ENCODE measurements at regions of chr2 and their contacts with region 1.

Region 1: DNA sequence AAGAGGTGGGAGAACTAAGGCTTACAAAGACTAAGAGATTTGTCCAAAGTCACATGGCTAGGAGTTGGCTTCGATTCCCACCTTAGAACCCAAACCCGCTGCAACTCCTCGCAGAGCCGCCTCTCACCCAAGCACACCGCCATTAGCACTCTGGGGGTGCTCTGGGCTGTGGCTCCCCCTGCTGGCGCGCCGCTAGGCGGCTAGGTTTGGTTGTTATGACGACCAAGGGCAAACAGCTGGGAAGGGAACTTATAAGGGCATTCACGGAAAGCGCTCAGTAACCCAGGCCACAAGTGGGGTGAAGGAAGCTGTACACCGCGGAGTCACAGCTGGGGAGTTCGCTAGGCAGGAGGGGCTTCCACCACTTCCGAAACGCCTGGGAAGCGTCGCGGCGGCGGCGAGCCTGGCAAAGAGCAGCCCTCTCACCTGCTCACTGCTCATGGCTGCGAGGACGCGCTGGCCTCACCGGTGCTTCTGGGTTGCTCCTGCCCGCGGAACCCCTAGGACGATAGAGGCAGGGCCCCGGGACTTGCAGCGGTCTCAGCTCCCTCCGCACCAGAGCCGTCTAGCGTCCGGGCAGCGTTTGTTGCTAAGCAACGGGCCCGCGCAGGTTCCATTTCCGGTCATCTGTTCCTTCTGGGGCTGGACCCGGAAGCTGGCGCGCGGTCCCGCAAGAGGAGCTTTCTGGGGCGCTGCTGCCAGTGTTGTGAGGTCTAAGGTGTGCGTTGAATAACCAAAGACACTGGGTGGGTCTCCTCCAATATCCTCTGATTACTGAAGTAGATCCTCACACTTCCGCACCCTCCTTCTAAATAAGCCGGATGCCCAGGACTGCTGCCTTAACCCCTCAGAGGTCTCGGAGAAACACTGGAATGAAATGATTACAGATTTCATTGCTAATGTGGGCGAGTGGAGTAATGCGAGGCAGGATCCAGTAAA is at the start of gene DNAH7:
- DNase-seq: peak; percentile 92 to 96 (median 92)
- H3K4me3 ChIP-seq: peak within 1 kb of the TSS; percentile 54 to 68
- H3K4me3 Mint-ChIP-seq: peak within 1 kb of the TSS; percentile 84 to 91 (median 86)
- H3K27ac ChIP-seq: peak within 1 kb of the TSS; percentile 27
- H3K27ac Mint-ChIP-seq: peak within 1 kb of the TSS; percentile 81 to 95 (median 86)
- H3K4me1 ChIP-seq: peaks cover 18% of the 10 kb centered on the region
- H3K4me1 Mint-ChIP-seq: peaks cover 5 to 15% (median 8%) of the 10 kb centered on the region in 4 donors
- H3K27me3 ChIP-seq: no peaks in the 10 kb centered on the region
- H3K27me3 Mint-ChIP-seq: peaks cover 1 to 7% of the 10 kb centered on the region in 2 donors
- total RNA-seq, gene DNAH7: not detected

Region 2: GRCh38 chr2:194545978-194546377 is 1522.6 kb before region 1 on chr2:
- CTCF ChIA-PET with region 1: interaction called, 4 read pairs
- POLR2A ChIA-PET with region 1: no interaction called
- intact Hi-C with region 1: loop called (anchors 1 kb)
- DNase-seq: no peak
- H3K4me3 ChIP-seq: no peak overlapping the region
- H3K4me3 Mint-ChIP-seq: no peak overlapping the region
- H3K27ac ChIP-seq: no peak overlapping the region
- H3K27ac Mint-ChIP-seq: no peak overlapping the region
- H3K4me1 ChIP-seq: no peaks in the 10 kb centered on the region
- H3K4me1 Mint-ChIP-seq: no peaks in the 10 kb centered on the region
- H3K27me3 ChIP-seq: no peaks in the 10 kb centered on the region
- H3K27me3 Mint-ChIP-seq: no peaks in the 10 kb centered on the region

Region 3: DNA sequence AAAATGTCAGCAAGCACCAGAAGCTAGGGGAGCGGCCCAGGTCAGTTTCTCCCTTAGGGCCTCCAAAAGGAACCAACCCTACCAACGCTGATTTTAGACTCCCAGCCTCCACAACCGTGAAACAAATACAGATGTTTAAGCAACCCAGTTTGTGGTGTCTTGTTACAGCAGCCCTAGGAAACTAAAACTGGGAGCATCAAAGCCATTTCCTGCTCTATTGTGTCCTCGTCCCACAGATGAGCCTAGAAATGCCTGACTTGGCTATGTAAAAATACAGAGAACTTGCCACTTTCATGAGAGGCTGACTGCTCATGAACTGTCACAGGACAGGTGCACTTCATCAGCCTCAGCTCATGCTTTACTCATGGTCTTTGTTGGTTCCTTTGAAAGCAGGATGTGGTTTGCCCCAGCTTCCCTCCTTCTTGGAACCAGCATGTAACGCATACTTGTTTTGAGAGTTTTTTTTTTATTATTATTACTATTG is 509.1 kb before region 1 on chr2:
- CTCF ChIA-PET with region 1: no interaction called
- POLR2A ChIA-PET with region 1: no interaction called
- intact Hi-C with region 1: loop called (anchors 5 kb)
- DNase-seq: peak; percentile 87 to 90 (median 89)
- H3K4me3 ChIP-seq: no peak overlapping the region
- H3K4me3 Mint-ChIP-seq: peak overlapping the region; percentile 49 to 85 (median 70)
- H3K27ac ChIP-seq: peak overlapping the region; percentile 31
- H3K27ac Mint-ChIP-seq: peak overlapping the region; percentile 82 to 97 (median 92)
- H3K4me1 ChIP-seq: peaks cover 86% of the 10 kb centered on the region
- H3K4me1 Mint-ChIP-seq: peaks cover 49 to 74% (median 58%) of the 10 kb centered on the region in 4 donors
- H3K27me3 ChIP-seq: no peaks in the 10 kb centered on the region
- H3K27me3 Mint-ChIP-seq: no peaks in the 10 kb centered on the region

Region 4: DNA sequence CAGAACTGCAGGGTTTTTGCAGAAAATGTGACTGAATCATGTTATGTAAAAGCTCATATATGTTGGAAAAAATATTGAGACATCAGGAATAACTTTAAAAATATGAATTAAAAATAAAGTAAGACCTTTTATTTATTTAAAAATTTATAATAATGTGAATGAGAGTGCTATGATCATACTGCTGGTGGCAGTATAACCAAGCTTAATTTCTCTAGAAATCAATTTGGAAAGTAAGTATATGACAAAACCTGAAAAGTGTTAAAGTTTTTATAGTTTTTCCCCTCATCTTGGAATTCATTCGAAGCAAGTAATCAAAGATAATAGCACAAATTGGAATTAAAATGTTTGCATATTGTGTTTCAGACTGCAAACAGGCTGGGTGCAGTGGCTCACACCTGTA is 404.0 kb before region 1 on chr2:
- CTCF ChIA-PET with region 1: interaction called, 7 read pairs
- POLR2A ChIA-PET with region 1: no interaction called
- intact Hi-C with region 1: loop called (anchors 2 kb)
- DNase-seq: no peak
- H3K4me3 ChIP-seq: no peak overlapping the region
- H3K4me3 Mint-ChIP-seq: peak overlapping the region in 2 of 8 donors; percentile 22 to 23
- H3K27ac ChIP-seq: no peak overlapping the region
- H3K27ac Mint-ChIP-seq: peak overlapping the region in 5 of 7 donors; percentile 18 to 82 (median 53)
- H3K4me1 ChIP-seq: peaks cover 74% of the 10 kb centered on the region
- H3K4me1 Mint-ChIP-seq: peaks cover 35 to 65% (median 43%) of the 10 kb centered on the region in 4 donors
- H3K27me3 ChIP-seq: no peaks in the 10 kb centered on the region
- H3K27me3 Mint-ChIP-seq: no peaks in the 10 kb centered on the region

Region 5: GRCh38 chr2:196291873-196292800 is 223.6 kb after region 1 on chr2:
- CTCF ChIA-PET with region 1: interaction called, 11 read pairs
- POLR2A ChIA-PET with region 1: no interaction called
- intact Hi-C with region 1: loop called (anchors 5 kb)
- DNase-seq: no peak
- H3K4me3 ChIP-seq: no peak overlapping the region
- H3K4me3 Mint-ChIP-seq: peak overlapping the region; percentile 1 to 66 (median 50)
- H3K27ac ChIP-seq: no peak overlapping the region
- H3K27ac Mint-ChIP-seq: peak overlapping the region; percentile 2 to 81 (median 48)
- H3K4me1 ChIP-seq: peaks cover 49% of the 10 kb centered on the region
- H3K4me1 Mint-ChIP-seq: peaks cover 23 to 54% (median 44%) of the 10 kb centered on the region in 4 donors
- H3K27me3 ChIP-seq: no peaks in the 10 kb centered on the region
- H3K27me3 Mint-ChIP-seq: no peaks in the 10 kb centered on the region

Region 6: DNA sequence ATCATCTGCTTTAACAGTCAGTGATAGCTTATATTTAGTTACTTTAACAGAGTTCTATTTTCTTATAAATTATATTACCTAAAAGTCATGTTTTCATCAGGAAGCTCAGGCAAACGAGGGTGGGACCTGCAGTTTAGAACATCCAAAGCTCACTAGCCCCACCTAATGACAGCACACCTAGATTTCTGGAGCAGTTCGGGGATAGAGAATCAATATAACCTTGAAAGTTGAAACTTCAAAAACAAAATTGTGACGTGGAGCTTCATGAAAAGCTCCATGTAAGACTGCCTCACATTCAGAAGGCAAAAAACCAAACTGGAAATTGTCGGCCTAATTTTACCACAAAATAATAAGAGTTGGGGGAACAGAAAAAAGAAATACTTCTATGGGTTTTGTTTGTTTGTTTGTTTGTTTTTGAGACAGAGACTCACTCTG is 385.1 kb after region 1 on chr2:
- CTCF ChIA-PET with region 1: interaction called, 19 read pairs
- POLR2A ChIA-PET with region 1: no interaction called
- intact Hi-C with region 1: no loop called
- DNase-seq: peak in 4 of 5 donors; percentile 14 to 26 (median 20)
- H3K4me3 ChIP-seq: no peak overlapping the region
- H3K4me3 Mint-ChIP-seq: no peak overlapping the region
- H3K27ac ChIP-seq: no peak overlapping the region
- H3K27ac Mint-ChIP-seq: no peak overlapping the region
- H3K4me1 ChIP-seq: no peaks in the 10 kb centered on the region
- H3K4me1 Mint-ChIP-seq: peaks cover 0 to 4% (median 1%) of the 10 kb centered on the region in 4 donors
- H3K27me3 ChIP-seq: peaks cover 8% of the 10 kb centered on the region
- H3K27me3 Mint-ChIP-seq: peaks cover 13 to 24% of the 10 kb centered on the region in 2 donors